ENCODE measurements at regions of chr18 and their contacts with region 1.

Region 1: GRCh38 chr18:74551936-74552555 is 17.7 kb downstream of the CNDP1 start:
- DNase-seq: peak; percentile 79 to 88 (median 84)
- ATAC-seq: peak; percentile 77 to 98 (median 92)
- H3K4me3 ChIP-seq: no peak overlapping the region
- H3K27ac ChIP-seq: no peak overlapping the region
- H3K4me1 ChIP-seq: peaks cover 0 to 17% (median 8%) of the 10 kb centered on the region in 12 donors
- H3K27me3 ChIP-seq: no peaks in the 10 kb centered on the region
- CTCF ChIP-seq: peak; percentile 74 to 94 (median 84)
- POLR2A ChIP-seq: no peak

Region 2: DNA sequence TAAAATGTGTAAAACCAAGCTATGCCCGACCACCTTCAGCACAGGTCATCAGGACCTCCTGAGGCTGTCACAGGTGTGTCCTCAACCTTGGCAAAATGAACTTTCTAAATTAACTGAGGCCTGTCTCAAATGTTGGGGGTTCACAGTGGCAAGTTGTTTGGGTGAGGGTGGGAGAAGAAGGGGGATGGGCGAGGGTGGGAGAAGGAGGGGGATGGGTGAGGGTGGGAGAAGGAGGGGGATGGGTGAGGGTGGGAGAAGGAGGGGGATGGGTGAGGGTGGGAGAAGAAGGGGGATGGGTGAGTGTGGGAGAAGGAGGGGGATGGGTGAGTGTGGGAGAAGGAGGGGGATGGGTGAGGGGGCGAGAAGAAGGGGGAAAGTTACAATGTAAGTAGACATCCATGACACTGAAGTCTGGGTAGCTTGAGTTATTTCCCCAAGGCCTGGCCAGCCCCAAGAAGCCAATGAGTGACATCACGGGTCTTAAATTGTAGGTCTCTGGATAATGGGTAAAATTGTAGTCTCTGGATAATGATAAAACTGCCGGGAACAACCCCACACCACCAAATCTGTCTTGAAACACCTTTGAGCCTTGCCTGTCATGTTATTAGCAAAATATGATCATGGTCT is 347.4 kb before region 1 on chr18:
- intact Hi-C with region 1: loop called in 7 of 10 experiments (anchors 5 to 10 kb)
- DNase-seq: no peak
- ATAC-seq: no peak
- H3K4me3 ChIP-seq: no peak overlapping the region
- H3K27ac ChIP-seq: no peak overlapping the region
- H3K4me1 ChIP-seq: peaks cover 0 to 8% (median 0%) of the 10 kb centered on the region in 12 donors
- H3K27me3 ChIP-seq: no peaks in the 10 kb centered on the region
- CTCF ChIP-seq: no peak
- POLR2A ChIP-seq: no peak

Region 3: DNA sequence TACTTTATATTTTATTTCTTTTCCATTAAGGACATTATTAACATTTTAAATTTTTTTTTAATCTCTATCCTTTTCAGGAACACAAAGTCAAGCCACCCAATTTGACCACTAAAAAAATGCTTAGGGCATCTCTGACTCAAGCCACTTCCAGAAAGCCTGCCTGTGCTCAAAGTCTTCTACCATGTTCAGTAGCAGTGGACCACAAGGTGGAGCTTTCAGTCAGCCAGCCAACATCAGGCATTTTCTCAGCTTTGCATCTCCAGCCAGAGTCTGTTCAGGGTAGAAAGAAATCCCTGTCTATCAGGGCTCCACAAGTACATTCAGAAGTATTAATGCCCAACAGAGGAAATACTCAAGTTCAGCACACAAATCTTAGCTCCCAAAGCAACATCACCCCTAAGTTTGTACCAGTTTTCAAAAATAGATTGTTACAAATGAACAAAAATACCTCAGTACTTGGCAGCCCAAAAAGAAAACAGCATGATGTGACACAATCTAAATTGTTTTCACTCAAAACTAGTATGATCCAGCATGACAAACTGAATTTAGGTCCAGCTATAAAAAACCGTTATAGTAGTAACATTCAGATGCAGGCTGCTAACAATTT is 198.8 kb before region 1 on chr18:
- intact Hi-C with region 1: loop called (anchors 1 to 5 kb)
- DNase-seq: peak in 4 of 5 donors; percentile 63 to 73 (median 68)
- ATAC-seq: peak; percentile 84 to 96 (median 92)
- H3K4me3 ChIP-seq: no peak overlapping the region
- H3K27ac ChIP-seq: no peak overlapping the region
- H3K4me1 ChIP-seq: peaks cover 0 to 9% (median 1%) of the 10 kb centered on the region in 12 donors
- H3K27me3 ChIP-seq: no peaks in the 10 kb centered on the region
- CTCF ChIP-seq: peak; percentile 52 to 88 (median 82)
- POLR2A ChIP-seq: no peak

Region 4: GRCh38 chr18:74534981-74535649 is 16.9 kb before region 1 on chr18:
- intact Hi-C with region 1: no loop called
- DNase-seq: no peak
- ATAC-seq: no peak
- H3K4me3 ChIP-seq: no peak overlapping the region
- H3K27ac ChIP-seq: no peak overlapping the region
- H3K4me1 ChIP-seq: no peaks in the 10 kb centered on the region
- H3K27me3 ChIP-seq: no peaks in the 10 kb centered on the region
- CTCF ChIP-seq: no peak
- POLR2A ChIP-seq: no peak

Region 5: DNA sequence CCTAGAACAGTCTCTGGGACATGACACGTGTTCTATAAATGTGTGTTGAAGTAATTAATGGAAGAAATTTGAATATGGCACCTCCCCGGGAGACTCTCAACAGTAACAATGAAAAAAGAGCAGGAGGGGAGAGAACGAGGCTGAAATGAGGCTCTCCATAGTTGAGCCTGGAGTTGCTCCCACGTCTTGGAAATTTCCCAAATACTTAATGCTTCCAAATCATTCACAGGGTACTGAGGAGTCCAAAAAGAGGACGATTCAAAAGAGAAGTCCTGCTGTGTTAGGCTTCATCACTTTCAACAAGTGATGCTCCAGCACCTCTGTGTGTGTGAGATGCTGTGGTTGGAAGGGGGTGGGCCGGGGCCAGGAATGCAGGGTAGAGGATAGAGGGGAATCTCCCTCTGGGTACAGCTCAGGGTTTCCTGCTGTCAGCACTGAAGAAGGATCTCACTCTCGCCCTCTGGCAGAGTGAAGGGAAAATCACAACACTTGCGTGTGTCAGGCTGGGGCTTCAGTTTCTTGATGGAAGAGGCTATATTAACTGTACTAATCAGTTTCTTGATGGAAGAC is 27.5 kb after region 1 on chr18:
- intact Hi-C with region 1: no loop called
- DNase-seq: no peak
- ATAC-seq: peak in 1 of 4 donors; percentile 27
- H3K4me3 ChIP-seq: no peak overlapping the region
- H3K27ac ChIP-seq: no peak overlapping the region
- H3K4me1 ChIP-seq: peaks cover 0 to 10% (median 3%) of the 10 kb centered on the region in 12 donors
- H3K27me3 ChIP-seq: no peaks in the 10 kb centered on the region
- CTCF ChIP-seq: no peak
- POLR2A ChIP-seq: no peak

Region 6: DNA sequence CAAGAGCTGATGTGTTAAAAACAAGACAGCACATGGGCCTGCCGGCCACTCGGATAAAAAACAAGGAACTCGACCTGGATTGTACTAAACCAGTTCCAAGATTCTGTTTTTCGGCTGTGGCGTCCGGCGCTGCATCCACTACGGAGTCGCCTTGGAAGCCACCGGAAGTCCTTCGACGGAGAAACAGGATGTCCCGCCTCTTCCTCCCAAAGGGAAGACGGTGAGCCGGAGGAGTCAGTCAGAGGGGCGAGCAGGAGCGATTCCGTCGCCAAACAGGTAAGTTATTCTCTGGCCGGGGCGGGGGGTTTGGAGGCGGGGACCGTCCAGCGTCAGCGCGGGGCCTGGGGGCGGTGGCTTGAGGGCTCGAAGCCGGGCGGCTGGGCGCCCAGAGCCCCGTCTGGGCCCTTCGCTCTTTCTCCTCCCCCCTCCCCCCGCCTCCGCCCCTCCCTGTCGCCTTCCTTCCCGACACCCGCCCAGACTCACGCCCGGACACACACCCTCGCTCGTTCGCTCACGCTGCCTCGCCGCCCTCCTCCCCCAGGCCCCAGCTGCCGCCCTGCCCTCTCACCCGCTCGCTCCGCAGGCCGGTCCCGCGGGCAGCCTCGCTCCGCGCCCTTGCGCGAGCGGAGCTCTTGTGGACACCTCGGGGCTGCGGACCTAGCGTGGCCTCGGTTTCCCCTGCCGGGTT is 45.8 kb after region 1 on chr18 and contains the start of gene ZNF407:
- intact Hi-C with region 1: loop called in 1 of 10 experiments (anchors 5 kb)
- DNase-seq: peak; percentile 90 to 91 (median 90)
- ATAC-seq: peak; percentile 89 to 95 (median 93)
- H3K4me3 ChIP-seq: peak within 1 kb of the TSS; percentile 66 to 96 (median 86)
- H3K27ac ChIP-seq: peak within 1 kb of the TSS; percentile 93 to 99 (median 98)
- H3K4me1 ChIP-seq: peaks cover 3 to 38% (median 27%) of the 10 kb centered on the region in 12 donors
- H3K27me3 ChIP-seq: no peaks in the 10 kb centered on the region
- CTCF ChIP-seq: no peak
- POLR2A ChIP-seq: no peak
- total RNA-seq, gene ZNF407: 8.1 to 14.7 (median 12.3) TPM

Measured in heart left ventricle (tissue), 16 donors.